B cell (primary cell): ENCODE measurements at regions of chr11 and their contacts with region 1.

Region 1: DNA sequence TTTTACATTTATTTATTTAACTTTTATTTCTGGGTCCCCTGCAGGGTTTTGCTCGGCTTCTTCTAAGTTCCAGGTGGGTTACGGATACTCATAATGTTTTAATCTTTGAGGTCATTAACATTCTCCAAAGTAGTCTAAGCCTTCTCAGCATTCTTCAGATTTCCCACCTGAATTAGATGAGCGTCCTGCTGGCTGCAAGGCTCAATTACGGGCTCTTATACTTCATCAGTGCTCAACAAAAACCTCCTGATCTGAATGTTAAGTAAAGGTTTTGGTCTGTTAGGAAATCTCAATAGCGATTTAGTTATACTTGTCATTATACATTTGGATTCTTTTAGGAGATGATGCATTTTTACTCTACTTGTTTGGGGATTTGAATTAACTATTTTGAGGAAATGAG is 27.3 kb upstream of the NFRKB start:
- DNase-seq: no peak
- ATAC-seq: no peak
- H3K4me3 ChIP-seq: no peak overlapping the region
- H3K4me3 Mint-ChIP-seq: no peak overlapping the region
- H3K27ac ChIP-seq: no peak overlapping the region
- H3K27ac Mint-ChIP-seq: no peak overlapping the region
- H3K4me1 ChIP-seq: peaks cover 0 to 8% of the 10 kb centered on the region in 2 donors
- H3K4me1 Mint-ChIP-seq: peaks cover 4% of the 10 kb centered on the region
- H3K27me3 ChIP-seq: no peaks in the 10 kb centered on the region
- H3K27me3 Mint-ChIP-seq: no peaks in the 10 kb centered on the region
- CTCF ChIP-seq: no peak

Region 2: DNA sequence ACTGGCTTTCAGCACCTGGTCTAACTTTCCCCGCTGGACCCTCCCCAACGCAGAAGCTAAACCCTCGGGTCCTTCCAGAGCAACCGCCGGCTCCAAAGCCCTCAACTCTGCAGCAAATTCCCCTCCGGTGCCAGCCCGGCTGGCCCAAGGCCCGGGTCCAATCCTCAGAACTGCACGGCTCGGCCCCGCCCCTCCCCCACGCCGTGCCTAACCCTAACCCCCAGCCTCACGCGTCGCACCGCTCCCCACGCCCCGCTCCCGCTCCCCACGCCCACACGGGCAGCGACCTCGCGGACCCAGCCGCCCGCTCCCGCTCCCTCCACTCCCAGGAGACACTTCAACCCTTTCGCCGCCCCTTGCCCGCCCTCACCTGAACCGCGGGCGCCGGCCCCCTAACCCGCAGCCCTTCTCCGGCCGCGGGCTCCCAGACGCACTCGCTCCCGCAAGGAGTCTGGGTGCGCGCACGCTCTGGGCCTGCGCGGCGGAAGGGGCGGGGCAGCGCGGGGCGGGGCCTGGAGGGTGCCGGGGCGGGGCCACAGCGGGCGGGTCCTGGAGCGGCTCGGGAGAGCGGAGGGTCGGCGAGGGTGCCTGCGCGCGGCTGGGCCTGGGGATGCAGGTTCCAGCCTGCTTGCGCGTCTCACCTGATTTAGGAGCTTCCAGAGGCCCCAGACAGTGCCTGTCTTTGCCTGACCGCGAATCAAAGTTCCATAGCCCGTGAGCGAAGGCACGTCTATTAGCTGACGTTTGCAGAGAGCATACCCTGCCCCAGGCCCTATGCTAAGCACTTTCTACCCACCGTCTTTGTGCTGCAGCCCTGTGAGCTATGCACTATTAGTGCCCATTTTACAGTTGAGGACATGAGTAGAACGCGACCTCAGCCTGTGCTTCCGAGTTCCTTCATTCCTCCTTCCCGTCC is 27.3 kb before region 1 on chr11 and contains the start of gene NFRKB:
- CTCF ChIA-PET with region 1: interaction called, 4 read pairs
- POLR2A ChIA-PET with region 1: no interaction called
- intact Hi-C with region 1: loop called (anchors 1 kb)
- DNase-seq: peak; percentile 86
- ATAC-seq: peak; percentile 97
- H3K4me3 ChIP-seq: peak within 1 kb of the TSS; percentile 71 to 92 (median 79)
- H3K4me3 Mint-ChIP-seq: peak within 1 kb of the TSS; percentile 92
- H3K27ac ChIP-seq: peak within 1 kb of the TSS; percentile 35 to 53
- H3K27ac Mint-ChIP-seq: peak within 1 kb of the TSS; percentile 82
- H3K4me1 ChIP-seq: peaks cover 10 to 14% of the 10 kb centered on the region in 2 donors
- H3K4me1 Mint-ChIP-seq: peaks cover 22% of the 10 kb centered on the region
- H3K27me3 ChIP-seq: no peaks in the 10 kb centered on the region
- H3K27me3 Mint-ChIP-seq: no peaks in the 10 kb centered on the region
- CTCF ChIP-seq: no peak
- total RNA-seq, gene NFRKB: 36.9 and 40.4 TPM in 2 replicates

Region 3: DNA sequence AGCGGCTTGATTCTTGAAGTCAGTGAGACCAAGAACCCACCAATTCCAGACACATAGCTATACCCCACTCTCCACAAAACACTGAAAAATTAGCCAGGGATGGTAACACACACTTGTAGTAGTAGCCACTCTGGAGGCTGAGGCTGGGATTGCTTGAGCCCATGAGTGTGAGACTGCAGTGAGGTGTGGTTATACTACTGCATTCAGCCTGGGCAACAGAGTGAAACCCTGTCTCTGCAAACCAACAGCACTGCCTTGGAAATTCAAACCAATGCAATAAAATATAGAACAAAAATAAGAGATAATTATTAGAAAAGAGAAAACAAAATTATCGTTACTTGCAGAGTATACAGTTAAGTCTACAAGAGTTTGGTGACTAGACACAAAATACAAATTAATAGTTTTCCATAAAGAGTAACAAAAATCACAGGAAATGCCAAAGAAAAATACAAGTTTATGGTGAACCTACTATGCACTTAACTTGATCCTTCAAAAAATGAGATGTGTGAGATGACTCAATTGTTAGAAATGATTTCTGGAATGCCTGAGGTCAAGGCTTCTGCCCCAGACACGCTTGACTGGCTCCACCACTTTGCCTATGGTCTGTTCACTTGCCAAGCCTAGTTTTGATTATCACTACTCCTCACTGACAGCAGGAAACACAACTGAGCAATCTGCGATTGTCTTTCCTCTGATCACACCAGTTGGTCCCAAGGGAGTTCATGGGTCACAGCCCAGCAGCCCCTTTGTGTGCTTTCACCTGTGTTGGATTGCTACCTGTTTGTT is 100.3 kb after region 1 on chr11:
- CTCF ChIA-PET with region 1: no interaction called
- POLR2A ChIA-PET with region 1: no interaction called
- intact Hi-C with region 1: no loop called
- DNase-seq: peak; percentile 74
- ATAC-seq: peak; percentile 85
- H3K4me3 ChIP-seq: no peak overlapping the region
- H3K4me3 Mint-ChIP-seq: peak overlapping the region; percentile 0
- H3K27ac ChIP-seq: no peak overlapping the region
- H3K27ac Mint-ChIP-seq: no peak overlapping the region
- H3K4me1 ChIP-seq: peaks cover 7 to 9% of the 10 kb centered on the region in 2 donors
- H3K4me1 Mint-ChIP-seq: peaks cover 13% of the 10 kb centered on the region
- H3K27me3 ChIP-seq: peaks cover 0 to 48% (median 26%) of the 10 kb centered on the region in 4 experiments
- H3K27me3 Mint-ChIP-seq: peaks cover 59% of the 10 kb centered on the region
- CTCF ChIP-seq: no peak

Region 4: DNA sequence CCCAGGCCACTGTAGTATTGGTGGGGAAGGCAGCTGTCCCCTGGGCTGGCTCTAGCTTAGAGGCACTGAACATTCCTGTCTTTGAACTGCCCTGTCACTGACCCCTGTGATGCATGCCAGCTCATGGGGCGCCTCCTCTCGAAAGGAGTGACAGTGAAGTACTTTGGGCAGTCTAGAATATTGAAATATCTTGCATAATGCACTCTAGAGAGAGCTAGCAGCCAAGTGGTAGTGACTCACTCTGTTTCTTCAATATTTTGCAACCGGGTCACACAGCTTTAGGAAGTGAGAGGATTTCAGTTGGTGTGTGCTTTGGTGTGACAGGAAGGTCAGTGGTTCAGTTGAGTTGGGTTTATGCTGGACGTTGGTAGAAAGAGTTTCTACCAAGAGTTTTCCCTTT is 201.4 kb after region 1 on chr11:
- CTCF ChIA-PET with region 1: interaction called, 339 read pairs
- POLR2A ChIA-PET with region 1: no interaction called
- intact Hi-C with region 1: no loop called
- DNase-seq: no peak
- ATAC-seq: no peak
- H3K4me3 ChIP-seq: no peak overlapping the region
- H3K4me3 Mint-ChIP-seq: peak overlapping the region; percentile 34
- H3K27ac ChIP-seq: no peak overlapping the region
- H3K27ac Mint-ChIP-seq: no peak overlapping the region
- H3K4me1 ChIP-seq: peaks cover 49 to 50% of the 10 kb centered on the region in 2 donors
- H3K4me1 Mint-ChIP-seq: peaks cover 55% of the 10 kb centered on the region
- H3K27me3 ChIP-seq: no peaks in the 10 kb centered on the region
- H3K27me3 Mint-ChIP-seq: no peaks in the 10 kb centered on the region
- CTCF ChIP-seq: no peak